PC-3 (cell line): ENCODE measurements at regions of chr3 and their contacts with region 1.

Region 1: DNA sequence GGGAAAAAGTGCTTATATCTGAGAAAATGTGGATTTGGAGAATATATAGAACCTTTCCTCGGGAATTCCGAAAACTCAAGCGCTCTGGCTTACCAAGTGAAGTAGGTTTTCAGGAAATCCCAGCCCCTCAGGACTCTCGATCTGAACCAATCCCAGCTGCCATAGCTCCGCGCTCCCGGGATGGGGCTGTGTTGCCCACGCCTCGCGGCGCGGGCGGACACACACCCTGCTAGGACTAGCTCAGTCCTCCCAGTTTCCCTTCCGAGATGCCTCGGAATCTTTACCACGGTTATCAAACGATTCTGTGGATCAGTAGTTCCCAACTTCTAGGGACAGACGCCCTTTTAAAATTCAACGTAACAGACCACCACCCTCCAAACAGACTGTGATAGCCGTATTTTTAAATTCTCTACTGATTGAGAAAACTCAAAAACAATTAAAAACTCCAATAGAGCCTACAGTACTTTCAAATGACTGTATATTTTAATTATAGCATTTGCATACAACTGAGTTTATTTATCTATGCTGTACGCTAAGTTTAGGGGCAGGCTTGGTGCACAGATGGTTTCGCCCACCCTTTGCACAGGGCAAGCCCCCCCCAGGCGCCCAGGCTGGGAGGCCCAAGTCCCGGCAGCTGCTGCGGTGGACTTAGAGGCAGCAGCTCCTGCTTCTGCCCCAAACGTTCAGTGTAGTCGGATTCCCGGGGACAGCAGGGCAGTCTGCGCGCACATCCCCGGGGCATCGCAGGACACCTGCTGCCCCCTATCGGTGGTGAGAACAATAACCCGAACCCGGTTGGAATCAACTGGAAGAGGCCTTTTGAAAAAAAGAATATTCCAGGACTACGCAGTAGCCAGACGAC is 52.3 kb downstream of the CCDC54 start:
- DNase-seq: peak; percentile 90
- ATAC-seq: peak; percentile 46
- H3K4me3 ChIP-seq: peak overlapping the region; percentile 76; the same call in 1 of the 2 replicates
- H3K27ac ChIP-seq: no peak overlapping the region
- H3K4me1 ChIP-seq: peaks cover 21% of the 10 kb centered on the region
- H3K27me3 ChIP-seq: no peaks in the 10 kb centered on the region
- CTCF ChIP-seq: peak; percentile 93

Region 2: DNA sequence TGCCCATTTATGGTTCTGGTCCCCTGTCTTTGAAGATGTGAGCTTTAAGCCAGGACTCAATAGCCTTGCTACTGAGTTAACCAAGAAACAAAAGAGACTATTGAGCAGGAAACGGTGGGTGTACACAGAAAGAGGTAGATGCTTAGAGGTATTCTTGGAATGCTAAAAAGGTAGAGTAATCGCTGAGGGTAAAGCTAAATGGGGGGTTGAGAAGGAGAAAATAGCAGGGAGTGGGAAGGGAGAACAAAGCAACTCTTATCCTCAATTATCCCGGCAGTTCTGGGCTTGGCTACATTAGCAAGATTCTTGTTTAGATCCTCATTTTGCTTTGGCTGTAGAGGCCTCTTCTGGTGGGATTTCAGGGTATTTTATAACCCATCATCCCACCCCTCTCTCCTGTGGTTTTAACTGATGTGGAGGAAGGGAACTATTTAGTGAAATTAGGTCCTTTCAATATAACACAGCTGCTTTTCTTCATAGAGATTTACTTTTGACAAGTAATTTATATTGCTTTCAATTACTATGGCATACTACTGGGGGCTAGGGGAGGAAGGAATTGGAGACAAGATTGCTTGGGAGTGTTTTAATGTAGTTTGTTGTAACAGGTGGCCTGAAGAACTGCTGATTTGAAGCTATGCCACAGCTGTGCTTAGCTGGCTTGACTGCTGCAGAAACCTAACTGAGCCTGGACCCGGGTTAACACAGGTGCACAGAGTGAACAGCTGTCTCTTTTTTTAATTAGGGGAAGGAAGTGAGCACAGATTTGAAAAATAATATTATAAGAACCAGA is 286.6 kb before region 1 on chr3:
- CTCF ChIA-PET with region 1: no interaction called
- POLR2A ChIA-PET with region 1: interaction called, 11 read pairs
- intact Hi-C with region 1: no loop called
- DNase-seq: no peak
- ATAC-seq: no peak
- H3K4me3 ChIP-seq: no peak overlapping the region
- H3K27ac ChIP-seq: no peak overlapping the region
- H3K4me1 ChIP-seq: no peaks in the 10 kb centered on the region
- H3K27me3 ChIP-seq: no peaks in the 10 kb centered on the region
- CTCF ChIP-seq: no peak

Region 3: DNA sequence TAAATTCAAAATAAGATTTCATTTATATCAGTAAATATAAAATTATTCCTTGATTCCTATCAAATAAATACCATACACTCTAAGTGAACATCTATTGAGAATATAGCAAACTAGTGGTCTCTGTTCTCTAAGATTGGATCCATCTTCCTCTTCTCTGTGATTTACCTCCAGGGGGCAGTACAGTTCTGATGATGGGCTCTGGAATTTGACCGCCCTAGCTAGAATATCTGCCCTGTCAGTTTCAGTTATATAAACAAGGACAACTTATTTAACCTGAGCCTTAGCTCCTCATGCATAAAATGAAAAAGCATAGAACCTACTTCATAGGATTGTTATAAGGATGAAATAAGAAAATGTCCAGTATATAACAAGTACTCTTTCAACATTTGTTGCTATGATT is 223.4 kb before region 1 on chr3:
- CTCF ChIA-PET with region 1: no interaction called
- POLR2A ChIA-PET with region 1: no interaction called
- intact Hi-C with region 1: loop called (anchors 10 kb)
- DNase-seq: peak; percentile 86
- ATAC-seq: peak; percentile 44
- H3K4me3 ChIP-seq: no peak overlapping the region
- H3K27ac ChIP-seq: no peak overlapping the region
- H3K4me1 ChIP-seq: peaks cover 25% of the 10 kb centered on the region
- H3K27me3 ChIP-seq: no peaks in the 10 kb centered on the region
- CTCF ChIP-seq: peak; percentile 91

Region 4: GRCh38 chr3:107271787-107272387 is 157.7 kb before region 1 on chr3:
- CTCF ChIA-PET with region 1: interaction called, 8 read pairs
- POLR2A ChIA-PET with region 1: no interaction called
- intact Hi-C with region 1: loop called (anchors 1 kb)
- DNase-seq: peak; percentile 60
- ATAC-seq: peak; percentile 88
- H3K4me3 ChIP-seq: no peak overlapping the region
- H3K27ac ChIP-seq: no peak overlapping the region
- H3K4me1 ChIP-seq: no peaks in the 10 kb centered on the region
- H3K27me3 ChIP-seq: no peaks in the 10 kb centered on the region
- CTCF ChIP-seq: peak; percentile 92

Region 5: GRCh38 chr3:107522510-107523288 is 93.1 kb after region 1 on chr3 and contains the start of gene BBX:
- CTCF ChIA-PET with region 1: interaction called, 4 read pairs
- POLR2A ChIA-PET with region 1: no interaction called
- intact Hi-C with region 1: loop called (anchors 1 kb)
- DNase-seq: peak; percentile 93
- ATAC-seq: peak; percentile 83
- H3K4me3 ChIP-seq: peak within 1 kb of the TSS; percentile 90
- H3K27ac ChIP-seq: peak within 1 kb of the TSS; percentile 12; the same call in 1 of the 2 replicates
- H3K4me1 ChIP-seq: peaks cover 14% of the 10 kb centered on the region
- H3K27me3 ChIP-seq: no peaks in the 10 kb centered on the region
- CTCF ChIP-seq: no peak
- total RNA-seq, gene BBX: 45.8 and 66.8 TPM in 2 replicates

Region 6: GRCh38 chr3:107651782-107652181 is 222.2 kb after region 1 on chr3:
- CTCF ChIA-PET with region 1: interaction called, 4 read pairs
- POLR2A ChIA-PET with region 1: no interaction called
- intact Hi-C with region 1: loop called (anchors 10 kb)
- DNase-seq: no peak
- ATAC-seq: no peak
- H3K4me3 ChIP-seq: no peak overlapping the region
- H3K27ac ChIP-seq: no peak overlapping the region
- H3K4me1 ChIP-seq: peaks cover 9% of the 10 kb centered on the region
- H3K27me3 ChIP-seq: no peaks in the 10 kb centered on the region
- CTCF ChIP-seq: no peak

Region 7: DNA sequence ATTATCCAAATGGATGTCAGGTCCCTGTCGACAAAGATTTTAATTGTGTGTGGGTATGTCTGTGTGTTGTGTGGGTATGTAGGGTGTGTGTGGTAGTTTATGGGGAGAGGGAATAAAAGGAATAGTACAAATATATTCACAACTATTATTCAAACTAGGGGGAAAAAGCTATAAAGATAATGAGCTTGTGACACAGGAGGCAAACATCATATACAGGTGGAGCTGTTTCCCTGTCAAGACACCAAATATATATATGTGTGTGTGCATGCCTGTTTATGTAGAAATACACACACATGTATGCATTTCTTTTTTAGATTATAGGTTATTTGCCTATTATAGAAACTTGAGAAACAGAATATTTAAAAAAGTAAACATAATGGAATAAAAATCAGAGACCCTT is 552.6 kb after region 1 on chr3:
- CTCF ChIA-PET with region 1: no interaction called
- POLR2A ChIA-PET with region 1: interaction called, 15 read pairs
- intact Hi-C with region 1: no loop called
- DNase-seq: no peak
- ATAC-seq: no peak
- H3K4me3 ChIP-seq: no peak overlapping the region
- H3K27ac ChIP-seq: no peak overlapping the region
- H3K4me1 ChIP-seq: peaks cover 30% of the 10 kb centered on the region
- H3K27me3 ChIP-seq: no peaks in the 10 kb centered on the region
- CTCF ChIP-seq: no peak